GM12878 (cell line): ENCODE measurements at regions of chr1 and their contacts with region 1.

Region 1: DNA sequence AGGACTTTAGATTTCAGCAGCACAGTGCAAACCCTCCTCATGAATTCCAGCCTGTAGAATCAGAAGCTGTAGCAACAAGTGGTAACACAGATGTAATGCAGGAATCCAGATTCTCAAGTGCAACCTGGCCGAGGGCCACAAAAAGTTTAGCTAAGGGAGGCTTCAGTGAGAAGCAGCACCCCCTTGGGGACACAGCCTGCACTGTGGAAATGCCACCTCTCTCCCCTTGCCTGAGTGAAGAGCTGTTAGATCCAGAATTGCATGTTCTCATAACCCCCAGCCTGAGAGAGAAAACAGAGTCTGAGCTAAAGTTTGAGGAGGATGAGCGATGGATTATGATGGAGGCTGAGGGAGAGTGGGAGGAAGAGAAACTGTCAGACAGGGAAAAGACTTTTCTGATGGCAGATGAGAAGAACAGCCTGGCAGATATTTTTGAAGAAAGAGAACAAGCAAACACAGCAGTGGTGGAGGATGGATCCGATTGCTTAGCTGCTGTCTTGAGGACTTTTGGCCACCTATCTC is 80.5 kb upstream of the BMP8A start:
- DNase-seq: no peak
- ATAC-seq: peak; percentile 44
- H3K4me3 ChIP-seq: no peak overlapping the region
- H3K27ac ChIP-seq: no peak overlapping the region
- H3K4me1 ChIP-seq: peaks cover 33% of the 10 kb centered on the region
- H3K27me3 ChIP-seq: no peaks in the 10 kb centered on the region
- CTCF ChIP-seq: peak; percentile 65 to 70 (median 68)
- EP300 ChIP-seq: no peak
- POLR2A ChIP-seq: no peak
- RAD21 ChIP-seq: peak; percentile 65

Region 2: GRCh38 chr1:39268112-39268581 is 142.8 kb before region 1 on chr1:
- CTCF ChIA-PET with region 1: interaction called, 21 read pairs
- POLR2A ChIA-PET with region 1: interaction called, 4 read pairs
- RAD21 ChIA-PET with region 1: interaction called, 7 read pairs
- SMC1A ChIA-PET with region 1: interaction called, 6 read pairs
- in situ Hi-C with region 1: no loop called
- intact Hi-C with region 1: no loop called
- DNase-seq: no peak
- ATAC-seq: peak; percentile 29
- H3K4me3 ChIP-seq: peak overlapping the region; percentile 57; the same call in 1 of the 2 replicates
- H3K27ac ChIP-seq: peak overlapping the region; percentile 81
- H3K4me1 ChIP-seq: peaks cover 57% of the 10 kb centered on the region
- H3K27me3 ChIP-seq: no peaks in the 10 kb centered on the region
- CTCF ChIP-seq: no peak
- EP300 ChIP-seq: no peak
- POLR2A ChIP-seq: peak; percentile 38; the same call in 1 of the 2 replicates
- RAD21 ChIP-seq: no peak

Region 3: DNA sequence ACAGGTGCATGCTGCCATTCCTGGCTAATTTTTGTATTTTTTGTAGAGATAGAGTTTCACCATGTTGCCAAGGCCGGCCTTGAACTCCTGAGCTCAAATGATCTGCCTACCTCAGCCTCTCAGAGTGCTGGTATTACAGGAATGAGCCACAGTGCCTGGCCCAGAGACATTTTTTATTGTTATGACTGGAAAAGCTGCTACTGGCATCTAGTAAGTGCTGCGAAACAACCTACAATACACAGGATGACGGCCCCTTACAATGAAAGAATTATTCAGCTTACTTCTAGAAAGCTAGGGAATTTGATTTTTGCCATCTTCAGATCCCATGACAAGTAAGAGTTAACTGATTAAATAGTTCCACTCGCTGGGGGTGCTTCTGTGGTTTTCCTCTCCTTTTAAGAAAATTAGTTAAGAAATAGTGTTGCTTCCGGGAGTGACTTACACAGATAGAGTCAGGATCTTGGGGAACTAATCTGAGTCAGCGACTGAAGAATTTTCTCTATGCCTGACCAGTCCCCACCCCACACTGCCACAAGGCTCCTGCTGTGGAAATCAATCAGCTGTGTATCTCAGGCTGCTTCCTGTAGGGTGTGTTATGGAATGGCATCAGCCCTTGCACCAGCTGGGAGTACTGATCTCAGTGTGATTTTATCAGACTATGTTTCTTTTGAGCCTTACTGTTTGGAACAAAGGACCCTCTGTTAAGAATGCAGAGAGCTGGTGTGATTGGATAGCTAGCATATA is 12.5 kb before region 1 on chr1:
- CTCF ChIA-PET with region 1: interaction called, 14 read pairs
- POLR2A ChIA-PET with region 1: interaction called, 3 read pairs
- RAD21 ChIA-PET with region 1: interaction called, 6 read pairs
- SMC1A ChIA-PET with region 1: interaction called, 19 read pairs
- in situ Hi-C with region 1: no loop called
- intact Hi-C with region 1: no loop called
- DNase-seq: no peak
- ATAC-seq: peak; percentile 80
- H3K4me3 ChIP-seq: no peak overlapping the region
- H3K27ac ChIP-seq: peak overlapping the region; percentile 32
- H3K4me1 ChIP-seq: peaks cover 27% of the 10 kb centered on the region
- H3K27me3 ChIP-seq: no peaks in the 10 kb centered on the region
- CTCF ChIP-seq: no peak
- EP300 ChIP-seq: no peak
- POLR2A ChIP-seq: no peak
- RAD21 ChIP-seq: no peak

Region 4: GRCh38 chr1:39525366-39526165 is 114.6 kb after region 1 on chr1:
- CTCF ChIA-PET with region 1: no interaction called
- POLR2A ChIA-PET with region 1: no interaction called
- RAD21 ChIA-PET with region 1: no interaction called
- SMC1A ChIA-PET with region 1: no interaction called
- in situ Hi-C with region 1: no loop called
- intact Hi-C with region 1: no loop called
- DNase-seq: peak; percentile 84
- ATAC-seq: peak; percentile 99
- H3K4me3 ChIP-seq: no peak overlapping the region
- H3K27ac ChIP-seq: peak overlapping the region; percentile 42
- H3K4me1 ChIP-seq: peaks cover 22% of the 10 kb centered on the region
- H3K27me3 ChIP-seq: no peaks in the 10 kb centered on the region
- CTCF ChIP-seq: no peak
- EP300 ChIP-seq: peak in 1 of 2 experiments; percentile 64; a peak in 1 of 4 replicates
- POLR2A ChIP-seq: 0 out of 2 replicates have a peak, but pooled peaks have one; percentile 24
- RAD21 ChIP-seq: no peak